ENCODE measurements at regions of chr1 and their contacts with region 1.

Region 1: GRCh38 chr1:241611063-241611462 is 29.1 kb downstream of the CHML start:
- DNase-seq: peak; percentile 10 to 84
- H3K4me3 ChIP-seq: no peak overlapping the region
- H3K27ac ChIP-seq: peak overlapping the region; percentile 77; the same call in 1 of the 2 replicates
- H3K4me1 ChIP-seq: peaks cover 55% of the 10 kb centered on the region
- H3K27me3 ChIP-seq: no peaks in the 10 kb centered on the region
- CTCF ChIP-seq: peak; percentile 92

Region 2: DNA sequence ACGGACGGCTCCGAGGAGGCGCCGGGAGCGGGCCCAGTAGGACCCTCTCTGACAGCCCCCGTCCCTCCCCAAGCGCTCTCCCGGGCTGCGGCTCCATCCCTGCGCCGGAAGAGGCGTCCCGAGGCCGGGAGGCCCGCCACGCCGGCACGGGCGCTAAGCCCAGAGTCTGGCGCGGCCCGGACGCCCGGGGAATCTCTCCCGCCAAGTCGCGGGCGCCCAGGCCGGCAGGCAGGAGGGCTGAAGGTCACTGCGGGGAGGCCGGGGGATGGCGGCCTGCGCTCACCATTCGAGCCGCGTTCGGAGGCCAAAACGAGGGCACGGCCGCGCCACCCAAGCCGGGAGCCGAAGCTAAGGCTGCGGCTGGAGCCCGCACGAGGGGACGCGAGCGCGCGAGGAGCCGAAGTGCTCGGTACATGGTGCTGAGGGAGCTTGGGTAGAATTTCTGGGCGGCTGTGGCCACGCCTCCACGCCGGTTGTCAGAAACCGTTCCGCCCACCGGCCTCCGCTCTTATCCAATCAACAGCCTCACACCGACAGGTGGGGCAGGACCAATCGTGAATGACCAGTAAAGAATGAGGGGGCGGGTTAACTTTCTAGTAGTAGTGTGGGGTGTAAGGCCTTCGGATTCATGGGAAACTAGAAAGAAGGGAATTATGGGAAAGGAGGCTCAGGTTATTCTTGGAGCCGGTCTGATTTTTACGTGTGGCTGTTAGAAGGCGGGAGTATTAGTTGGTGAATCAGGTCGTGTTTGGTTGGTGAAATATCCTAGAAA is 91.6 kb before region 1 on chr1 and contains the start of gene FH:
- CTCF ChIA-PET with region 1: no interaction called
- POLR2A ChIA-PET with region 1: no interaction called
- intact Hi-C with region 1: loop called (anchors 5 kb)
- DNase-seq: peak; percentile 94 to 96
- H3K4me3 ChIP-seq: peak within 1 kb of the TSS; percentile 90
- H3K27ac ChIP-seq: peak within 1 kb of the TSS; percentile 39; the same call in 1 of the 2 replicates
- H3K4me1 ChIP-seq: peaks cover 26% of the 10 kb centered on the region
- H3K27me3 ChIP-seq: no peaks in the 10 kb centered on the region
- CTCF ChIP-seq: no peak
- total RNA-seq, gene FH: 56.1 and 88.3 TPM in 2 replicates

Region 3: GRCh38 chr1:241592273-241592958 is 18.6 kb before region 1 on chr1:
- CTCF ChIA-PET with region 1: interaction called, 4 read pairs
- POLR2A ChIA-PET with region 1: no interaction called
- intact Hi-C with region 1: loop called (anchors 1 kb)
- DNase-seq: peak in 1 of 2 experiments; percentile 87
- H3K4me3 ChIP-seq: no peak overlapping the region; the same call in 1 of the 2 replicates
- H3K27ac ChIP-seq: peak overlapping the region; percentile 78
- H3K4me1 ChIP-seq: peaks cover 36% of the 10 kb centered on the region
- H3K27me3 ChIP-seq: no peaks in the 10 kb centered on the region
- CTCF ChIP-seq: no peak

Region 4: GRCh38 chr1:241695246-241696171 is 84.4 kb after region 1 on chr1:
- CTCF ChIA-PET with region 1: no interaction called
- POLR2A ChIA-PET with region 1: no interaction called
- intact Hi-C with region 1: no loop called
- DNase-seq: no peak
- H3K4me3 ChIP-seq: no peak overlapping the region
- H3K27ac ChIP-seq: no peak overlapping the region
- H3K4me1 ChIP-seq: no peaks in the 10 kb centered on the region
- H3K27me3 ChIP-seq: no peaks in the 10 kb centered on the region
- CTCF ChIP-seq: no peak

Region 5: GRCh38 chr1:241834733-241835377 is 223.8 kb after region 1 on chr1:
- CTCF ChIA-PET with region 1: interaction called, 3 read pairs
- POLR2A ChIA-PET with region 1: no interaction called
- intact Hi-C with region 1: loop called (anchors 1 kb)
- DNase-seq: peak; percentile 15 to 60
- H3K4me3 ChIP-seq: no peak overlapping the region
- H3K27ac ChIP-seq: no peak overlapping the region
- H3K4me1 ChIP-seq: peaks cover 17% of the 10 kb centered on the region
- H3K27me3 ChIP-seq: no peaks in the 10 kb centered on the region
- CTCF ChIP-seq: peak; percentile 82

Region 6: GRCh38 chr1:241998412-241998921 is 387.4 kb after region 1 on chr1:
- CTCF ChIA-PET with region 1: interaction called, 3 read pairs
- POLR2A ChIA-PET with region 1: no interaction called
- intact Hi-C with region 1: loop called (anchors 5 kb)
- DNase-seq: peak; percentile 58 to 80
- H3K4me3 ChIP-seq: no peak overlapping the region
- H3K27ac ChIP-seq: no peak overlapping the region
- H3K4me1 ChIP-seq: no peaks in the 10 kb centered on the region
- H3K27me3 ChIP-seq: no peaks in the 10 kb centered on the region
- CTCF ChIP-seq: no peak; the same call in 1 of the 2 replicates

Measured in PC-9 (cell line).